Activated T-helper 2 cell treated with anti-CD3 and anti-CD28 coated beads, Interferon-gamma antibody, Interleukin-2, Interleukin-4, amounts not matched to agents 10 μg/mL and 5 μg/mL and 100 μg/mL, durations not matched to agents 14 hours and 24 hours and 36 hours (primary cell): ENCODE measurements at regions of chr16 and their contacts with region 1.

Region 1: GRCh38 chr16:23556881-23557778 is at the starts of genes EARS2 and UBFD1:
- DNase-seq: peak; percentile 96
- H3K4me3 Mint-ChIP-seq: peak within 1 kb of the TSS; percentile 97
- H3K27ac Mint-ChIP-seq: peak within 1 kb of the TSS; percentile 92
- H3K4me1 Mint-ChIP-seq: peaks cover 19% of the 10 kb centered on the region
- H3K27me3 Mint-ChIP-seq: no peaks in the 10 kb centered on the region
- total RNA-seq, gene EARS2: 25.3 and 26.6 TPM in 2 replicates
- total RNA-seq, gene UBFD1: 57.7 and 62.5 TPM in 2 replicates

Region 2: DNA sequence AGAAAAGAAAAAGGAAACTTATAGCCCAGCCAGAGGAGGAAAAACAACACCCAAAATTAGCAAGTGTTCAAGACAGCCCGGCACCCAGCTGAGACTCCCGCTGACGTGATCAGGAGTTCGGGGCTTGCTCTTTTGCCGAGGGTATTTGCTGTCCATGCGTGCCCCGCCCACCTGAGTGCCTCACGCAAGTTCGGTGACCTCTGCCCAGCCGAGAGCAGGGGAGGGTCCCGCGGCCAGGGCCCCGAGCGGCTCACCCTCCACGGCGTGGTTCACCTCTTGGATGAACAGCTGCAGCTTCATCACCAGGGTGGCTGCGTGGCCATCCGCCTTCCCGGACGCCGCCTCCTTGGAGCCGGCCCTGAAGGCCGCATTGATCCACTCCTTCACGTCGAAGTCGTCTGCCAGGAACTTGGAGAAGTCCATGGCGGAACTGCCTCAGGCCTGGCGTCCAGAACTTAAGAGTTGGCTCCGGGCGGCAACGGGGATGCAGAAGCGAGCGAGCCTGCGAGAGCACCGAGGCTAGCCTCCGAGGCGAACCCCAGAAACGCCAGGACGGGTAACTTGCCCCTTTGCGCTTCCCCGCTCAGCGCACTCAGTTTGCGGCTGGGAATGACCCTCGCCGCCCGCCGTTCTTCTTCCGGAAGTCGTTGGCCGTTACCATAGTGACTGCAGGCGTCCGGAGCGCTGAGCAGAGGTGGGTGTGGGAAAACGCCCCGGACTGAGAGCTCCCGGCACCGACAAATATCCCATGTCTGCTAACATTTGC is 104.4 kb before region 1 on chr16 and contains the start of gene COG7:
- intact Hi-C with region 1: loop called (anchors 5 kb)
- DNase-seq: peak; percentile 84
- H3K4me3 Mint-ChIP-seq: peak within 1 kb of the TSS; percentile 99
- H3K27ac Mint-ChIP-seq: peak within 1 kb of the TSS; percentile 92
- H3K4me1 Mint-ChIP-seq: peaks cover 13% of the 10 kb centered on the region
- H3K27me3 Mint-ChIP-seq: no peaks in the 10 kb centered on the region
- total RNA-seq, gene COG7: 23.8 and 24.2 TPM in 2 replicates

Region 3: GRCh38 chr16:23504451-23505179 is 52.5 kb before region 1 on chr16:
- intact Hi-C with region 1: loop called (anchors 1 kb)
- DNase-seq: peak; percentile 68
- H3K4me3 Mint-ChIP-seq: peak overlapping the region; percentile 15
- H3K27ac Mint-ChIP-seq: peak overlapping the region; percentile 77
- H3K4me1 Mint-ChIP-seq: peaks cover 64% of the 10 kb centered on the region
- H3K27me3 Mint-ChIP-seq: no peaks in the 10 kb centered on the region

Region 4: DNA sequence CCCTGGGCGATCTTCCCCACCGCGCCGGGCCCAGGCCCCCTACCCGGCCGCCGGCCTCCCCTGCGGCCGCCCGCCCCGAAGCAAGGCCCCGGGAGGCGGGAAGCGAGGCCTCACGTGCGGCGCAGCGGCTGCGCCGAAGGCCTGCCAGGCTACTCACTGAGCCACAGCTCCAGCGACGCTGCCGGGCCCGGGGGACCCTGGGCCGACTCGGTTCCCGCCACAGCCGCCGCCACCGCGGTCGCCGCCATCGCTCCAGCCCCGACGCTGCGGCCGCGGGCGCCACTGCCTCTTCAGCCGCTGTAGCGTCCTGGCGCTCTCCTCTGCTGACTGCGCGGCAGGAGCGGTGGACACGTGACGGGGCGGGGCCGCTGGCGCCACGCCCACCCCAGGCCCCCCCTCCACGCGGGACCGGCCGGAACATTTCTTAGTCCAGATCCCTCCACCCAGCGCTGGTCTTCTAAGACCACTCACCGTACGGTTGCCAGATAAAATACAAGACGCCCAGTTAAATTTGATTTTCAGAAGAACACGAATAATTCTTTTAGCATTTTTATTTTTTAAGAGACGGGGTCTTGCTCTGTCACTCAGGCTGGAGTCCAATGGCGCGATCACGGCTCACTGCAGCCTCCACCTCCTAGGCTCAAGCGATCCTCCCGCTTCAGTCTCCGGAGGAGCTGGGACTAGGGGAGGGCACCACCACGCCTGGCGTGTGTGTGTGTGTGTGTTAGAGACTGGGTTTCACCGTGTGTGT is 46.8 kb before region 1 on chr16 and contains the start of gene GGA2:
- intact Hi-C with region 1: loop called (anchors 1 kb)
- DNase-seq: peak; percentile 73
- H3K4me3 Mint-ChIP-seq: peak within 1 kb of the TSS; percentile 91
- H3K27ac Mint-ChIP-seq: peak within 1 kb of the TSS; percentile 90
- H3K4me1 Mint-ChIP-seq: peaks cover 54% of the 10 kb centered on the region
- H3K27me3 Mint-ChIP-seq: no peaks in the 10 kb centered on the region
- total RNA-seq, gene GGA2: 108 and 110 TPM in 2 replicates

Region 5: DNA sequence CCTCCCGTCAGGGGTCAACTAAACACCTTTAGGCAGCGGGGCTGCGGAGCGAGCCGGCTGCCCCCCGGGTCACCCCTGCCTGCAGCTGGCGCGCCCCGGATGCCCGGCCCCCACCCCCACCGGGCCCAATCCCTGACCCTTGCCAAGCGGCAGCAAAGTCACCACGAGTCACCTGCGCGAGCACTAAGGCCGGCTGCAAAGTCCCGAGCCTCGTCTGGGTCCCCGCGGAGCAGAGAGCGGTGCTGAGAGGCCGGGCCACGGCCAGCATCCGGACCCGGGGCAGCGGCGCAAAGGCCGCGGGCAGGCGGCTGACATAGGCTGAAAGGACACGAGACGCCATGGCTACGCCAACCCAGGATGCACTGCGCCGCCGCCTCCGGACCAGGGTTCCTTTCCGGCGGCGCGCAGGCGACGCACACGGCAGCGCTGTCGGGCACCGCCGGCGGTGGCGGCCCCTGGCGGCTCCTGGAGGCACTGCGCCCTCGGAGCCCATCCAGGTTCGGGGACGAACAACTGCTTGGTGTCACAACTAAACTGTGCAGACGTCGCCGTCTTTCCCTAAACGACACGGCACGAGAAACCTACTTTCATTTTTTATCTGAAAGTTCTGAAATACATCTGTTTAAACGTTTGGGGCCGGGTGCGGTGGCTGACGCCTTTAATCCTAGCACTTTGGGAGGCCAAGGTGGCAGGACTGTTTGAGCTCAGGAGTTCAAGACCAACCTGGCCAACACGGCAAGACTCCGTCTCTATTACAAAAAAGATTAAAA is 39.0 kb after region 1 on chr16 and contains the start of gene NDUFAB1:
- intact Hi-C with region 1: loop called (anchors 1 kb)
- DNase-seq: peak; percentile 88
- H3K4me3 Mint-ChIP-seq: peak within 1 kb of the TSS; percentile 81
- H3K27ac Mint-ChIP-seq: peak within 1 kb of the TSS; percentile 86
- H3K4me1 Mint-ChIP-seq: peaks cover 14% of the 10 kb centered on the region
- H3K27me3 Mint-ChIP-seq: no peaks in the 10 kb centered on the region
- total RNA-seq, gene NDUFAB1: 132 and 142 TPM in 2 replicates

Region 6: DNA sequence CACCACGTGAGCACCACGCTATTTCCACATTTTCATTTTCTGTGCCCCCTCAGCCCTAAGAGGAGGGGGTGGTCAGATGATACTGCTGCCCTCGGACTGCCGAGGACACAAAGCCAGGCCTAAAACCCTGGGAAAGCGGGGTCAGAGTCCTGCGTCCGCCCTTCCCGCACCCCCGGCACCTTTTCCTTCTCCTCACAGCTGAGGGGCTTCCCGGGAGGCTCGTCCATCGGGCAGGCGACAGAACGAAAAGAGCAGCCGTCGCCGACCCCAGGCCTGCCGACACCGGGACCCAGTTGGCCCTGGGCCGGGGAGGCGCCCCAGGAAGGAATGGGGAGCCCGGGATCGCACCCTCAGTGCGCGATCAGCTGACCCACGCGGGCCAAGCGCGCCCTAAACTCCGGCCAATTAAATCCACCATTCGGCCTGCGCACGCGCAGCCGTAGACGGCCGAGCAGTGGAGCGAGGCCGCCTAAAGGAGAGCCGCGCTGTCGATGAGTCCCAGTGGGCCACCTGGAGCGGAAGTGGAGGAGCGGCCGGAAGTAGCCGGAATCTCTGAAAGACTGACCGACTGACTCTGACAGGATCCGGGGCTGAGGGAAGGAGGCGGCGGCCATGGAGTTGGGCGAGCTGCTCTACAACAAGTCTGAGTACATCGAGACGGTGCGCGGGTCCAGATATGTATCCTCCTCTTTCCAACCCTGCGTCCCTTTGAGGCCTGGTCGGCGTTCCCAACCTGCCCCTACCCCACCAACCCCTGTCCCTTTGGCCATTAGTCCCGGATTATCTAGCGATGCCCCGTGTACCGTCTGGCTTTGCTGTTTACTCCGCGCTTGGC is 84.0 kb after region 1 on chr16 and contains the starts of genes DCTN5 and PALB2:
- intact Hi-C with region 1: loop called (anchors 1 kb)
- DNase-seq: peak; percentile 87
- H3K4me3 Mint-ChIP-seq: peak within 1 kb of the TSS; percentile 97
- H3K27ac Mint-ChIP-seq: peak within 1 kb of the TSS; percentile 94
- H3K4me1 Mint-ChIP-seq: peaks cover 22% of the 10 kb centered on the region
- H3K27me3 Mint-ChIP-seq: no peaks in the 10 kb centered on the region
- total RNA-seq, gene DCTN5: 86.5 and 88.4 TPM in 2 replicates
- total RNA-seq, gene PALB2: 25.6 and 30.8 TPM in 2 replicates

Region 7: DNA sequence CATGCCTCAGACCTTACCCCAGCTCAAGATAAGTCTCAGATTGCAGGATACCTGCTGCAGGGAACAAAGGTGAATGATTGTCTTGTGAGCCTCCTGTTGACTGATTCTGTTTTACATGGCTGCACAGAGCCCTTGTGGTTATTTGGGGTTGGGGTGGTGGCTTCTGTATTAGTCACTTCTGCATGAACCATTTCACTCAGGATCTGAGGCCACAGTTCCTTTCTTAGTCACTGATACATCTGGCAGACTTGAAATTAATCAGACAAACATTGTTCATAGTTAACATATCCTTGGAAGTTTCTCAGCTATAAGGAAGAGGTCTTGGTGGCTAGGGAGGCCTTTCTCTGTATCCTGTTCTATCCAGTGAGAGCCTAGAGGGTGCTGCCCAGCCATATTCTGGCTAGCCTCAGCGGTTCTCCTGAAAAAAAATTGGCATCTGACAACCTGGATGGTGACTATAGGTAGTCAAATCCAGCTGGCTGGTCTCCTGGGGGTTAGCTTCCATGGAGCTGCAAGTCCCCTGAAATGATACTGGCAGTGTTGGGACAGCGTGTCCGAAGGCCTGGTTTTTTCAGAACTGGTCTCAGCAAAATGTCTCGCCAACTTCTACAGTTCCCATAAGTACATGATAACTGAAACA is 113.1 kb after region 1 on chr16:
- intact Hi-C with region 1: loop called (anchors 1 kb)
- DNase-seq: peak; percentile 47
- H3K4me3 Mint-ChIP-seq: no peak overlapping the region
- H3K27ac Mint-ChIP-seq: peak overlapping the region; percentile 36
- H3K4me1 Mint-ChIP-seq: peaks cover 23% of the 10 kb centered on the region
- H3K27me3 Mint-ChIP-seq: no peaks in the 10 kb centered on the region